ENCODE measurements at regions of chr2 and their contacts with region 1.

Region 1: GRCh38 chr2:215982080-215982875 is 31.1 kb downstream of the MREG start:
- DNase-seq: no peak
- CTCF ChIP-seq: no peak

Region 2: GRCh38 chr2:216006164-216006663 is 23.9 kb after region 1 on chr2:
- CTCF ChIA-PET with region 1: interaction called, 15 read pairs
- POLR2A ChIA-PET with region 1: interaction called, 3 read pairs
- DNase-seq: peak; percentile 39
- CTCF ChIP-seq: no peak

Region 3: DNA sequence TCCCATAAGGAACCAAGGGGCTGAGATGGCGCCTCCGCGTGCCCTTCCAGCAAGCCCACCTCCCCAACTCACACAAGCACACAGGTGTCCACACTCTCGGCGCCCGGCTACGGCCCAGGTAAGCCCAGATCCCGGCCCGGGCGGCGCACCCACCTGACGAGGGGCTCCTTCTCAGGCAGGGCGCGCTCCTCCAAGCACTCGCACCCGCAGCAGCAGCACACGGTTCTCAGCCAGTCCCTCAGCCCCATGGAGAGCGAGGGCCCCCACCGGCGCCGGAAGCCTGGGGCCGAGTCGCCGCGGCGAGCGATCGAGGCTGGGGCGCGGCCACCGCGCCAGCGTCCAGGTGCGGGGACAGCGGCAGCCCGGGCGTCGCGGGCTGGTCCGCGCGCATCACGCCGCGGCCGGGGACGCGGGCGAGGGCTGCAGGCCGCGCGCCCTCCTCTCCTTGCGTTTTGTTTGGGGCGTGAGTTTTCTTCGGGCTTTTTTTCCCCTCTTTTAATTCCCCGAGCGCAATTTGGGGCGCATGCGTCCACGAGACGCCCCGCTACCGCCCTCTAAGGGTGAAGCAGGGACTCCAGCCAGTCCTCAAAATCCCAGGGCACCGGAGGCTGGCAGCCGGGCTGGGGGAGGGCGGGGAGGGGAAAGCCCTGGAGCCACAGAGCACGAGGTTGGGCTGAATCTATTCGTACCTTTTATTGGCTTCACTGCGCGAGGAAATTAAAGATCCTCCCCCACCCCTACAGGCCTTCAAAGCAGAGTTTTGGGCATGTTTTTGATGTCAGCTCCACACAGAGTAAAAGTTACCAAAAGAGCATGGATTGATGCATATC is 31.0 kb after region 1 on chr2 and contains the start of gene MREG:
- CTCF ChIA-PET with region 1: interaction called, 8 read pairs
- POLR2A ChIA-PET with region 1: interaction called, 11 read pairs
- DNase-seq: peak; percentile 88
- CTCF ChIP-seq: peak; percentile 88